ENCODE measurements at regions of chr13 and their contacts with region 1.

Region 1: GRCh38 chr13:39942552-39943273 is 287.3 kb downstream of the COG6 start:
- DNase-seq: peak; percentile 84
- ATAC-seq: peak; percentile 96
- H3K4me3 Mint-ChIP-seq: no peak overlapping the region
- H3K27ac Mint-ChIP-seq: no peak overlapping the region
- H3K4me1 Mint-ChIP-seq: peaks cover 24% of the 10 kb centered on the region
- H3K27me3 Mint-ChIP-seq: peaks cover 22% of the 10 kb centered on the region
- CTCF ChIP-seq: peak; percentile 73

Region 2: GRCh38 chr13:39777527-39778061 is 165.1 kb before region 1 on chr13:
- CTCF ChIA-PET with region 1: interaction called, 15 read pairs
- POLR2A ChIA-PET with region 1: no interaction called
- DNase-seq: no peak
- ATAC-seq: peak; percentile 63
- H3K4me3 Mint-ChIP-seq: no peak overlapping the region
- H3K27ac Mint-ChIP-seq: no peak overlapping the region
- H3K4me1 Mint-ChIP-seq: peaks cover 13% of the 10 kb centered on the region
- H3K27me3 Mint-ChIP-seq: no peaks in the 10 kb centered on the region
- CTCF ChIP-seq: no peak; the same call in 1 of the 2 replicates

Region 3: GRCh38 chr13:39881887-39882286 is 60.8 kb before region 1 on chr13:
- CTCF ChIA-PET with region 1: no interaction called
- POLR2A ChIA-PET with region 1: no interaction called
- DNase-seq: no peak
- ATAC-seq: no peak
- H3K4me3 Mint-ChIP-seq: no peak overlapping the region
- H3K27ac Mint-ChIP-seq: no peak overlapping the region
- H3K4me1 Mint-ChIP-seq: no peaks in the 10 kb centered on the region
- H3K27me3 Mint-ChIP-seq: no peaks in the 10 kb centered on the region
- CTCF ChIP-seq: no peak

Region 4: GRCh38 chr13:39892721-39893685 is 49.7 kb before region 1 on chr13:
- CTCF ChIA-PET with region 1: interaction called, 12 read pairs
- POLR2A ChIA-PET with region 1: no interaction called
- DNase-seq: no peak
- ATAC-seq: no peak
- H3K4me3 Mint-ChIP-seq: no peak overlapping the region
- H3K27ac Mint-ChIP-seq: no peak overlapping the region
- H3K4me1 Mint-ChIP-seq: peaks cover 9% of the 10 kb centered on the region
- H3K27me3 Mint-ChIP-seq: no peaks in the 10 kb centered on the region
- CTCF ChIP-seq: no peak

Region 5: DNA sequence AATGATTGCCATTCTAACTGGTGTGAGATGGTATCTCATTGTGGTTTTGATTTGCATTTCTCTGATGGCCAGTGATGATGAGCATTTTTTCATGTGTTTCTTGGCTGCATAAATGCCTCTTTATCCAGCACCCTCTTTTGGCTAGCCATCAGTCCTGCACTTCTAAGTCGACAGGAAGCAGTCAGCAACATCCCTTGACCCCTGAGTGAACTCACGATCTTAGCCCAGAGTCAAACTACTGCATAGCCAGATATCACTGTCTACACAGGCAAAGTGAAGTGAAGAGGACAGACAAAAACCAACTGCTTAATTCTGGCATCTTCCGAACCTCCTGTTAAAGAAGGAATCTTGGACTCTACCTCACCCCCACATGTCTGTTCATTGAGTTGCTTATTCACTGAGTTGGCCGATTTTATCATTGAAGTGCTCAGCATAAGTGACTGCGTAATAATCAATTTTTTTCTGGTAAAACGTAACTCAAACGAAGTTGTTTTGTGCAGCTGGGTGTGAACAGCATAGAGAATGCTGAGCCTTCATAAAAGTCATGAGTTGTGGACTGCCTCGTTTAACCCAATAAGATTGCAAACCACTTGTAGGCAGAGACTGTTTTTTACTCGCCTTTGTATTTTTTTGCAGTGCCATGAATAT is 16.9 kb after region 1 on chr13:
- CTCF ChIA-PET with region 1: interaction called, 55 read pairs
- POLR2A ChIA-PET with region 1: no interaction called
- DNase-seq: no peak
- ATAC-seq: no peak
- H3K4me3 Mint-ChIP-seq: no peak overlapping the region
- H3K27ac Mint-ChIP-seq: no peak overlapping the region
- H3K4me1 Mint-ChIP-seq: peaks cover 6% of the 10 kb centered on the region; the same call in 1 of the 2 replicates
- H3K27me3 Mint-ChIP-seq: no peaks in the 10 kb centered on the region
- CTCF ChIP-seq: no peak

Region 6: GRCh38 chr13:40017662-40018262 is 75.0 kb after region 1 on chr13:
- CTCF ChIA-PET with region 1: interaction called, 14 read pairs
- POLR2A ChIA-PET with region 1: no interaction called
- DNase-seq: no peak
- ATAC-seq: peak; percentile 70
- H3K4me3 Mint-ChIP-seq: no peak overlapping the region
- H3K27ac Mint-ChIP-seq: peak overlapping the region; percentile 9; the same call in 1 of the 2 replicates
- H3K4me1 Mint-ChIP-seq: peaks cover 7% of the 10 kb centered on the region
- H3K27me3 Mint-ChIP-seq: no peaks in the 10 kb centered on the region
- CTCF ChIP-seq: no peak

Region 7: GRCh38 chr13:40682449-40683240 is 739.9 kb after region 1 on chr13:
- CTCF ChIA-PET with region 1: interaction called, 18 read pairs
- POLR2A ChIA-PET with region 1: no interaction called
- DNase-seq: no peak
- ATAC-seq: no peak
- H3K4me3 Mint-ChIP-seq: peak overlapping the region; percentile 47
- H3K27ac Mint-ChIP-seq: peak overlapping the region; percentile 32
- H3K4me1 Mint-ChIP-seq: peaks cover 38% of the 10 kb centered on the region
- H3K27me3 Mint-ChIP-seq: peaks cover 22% of the 10 kb centered on the region
- CTCF ChIP-seq: peak; percentile 65

Measured in WTC11 (cell line).